Endothelial cell of umbilical vein (primary cell): ENCODE measurements at regions of chr12 and their contacts with region 1.

Region 1: DNA sequence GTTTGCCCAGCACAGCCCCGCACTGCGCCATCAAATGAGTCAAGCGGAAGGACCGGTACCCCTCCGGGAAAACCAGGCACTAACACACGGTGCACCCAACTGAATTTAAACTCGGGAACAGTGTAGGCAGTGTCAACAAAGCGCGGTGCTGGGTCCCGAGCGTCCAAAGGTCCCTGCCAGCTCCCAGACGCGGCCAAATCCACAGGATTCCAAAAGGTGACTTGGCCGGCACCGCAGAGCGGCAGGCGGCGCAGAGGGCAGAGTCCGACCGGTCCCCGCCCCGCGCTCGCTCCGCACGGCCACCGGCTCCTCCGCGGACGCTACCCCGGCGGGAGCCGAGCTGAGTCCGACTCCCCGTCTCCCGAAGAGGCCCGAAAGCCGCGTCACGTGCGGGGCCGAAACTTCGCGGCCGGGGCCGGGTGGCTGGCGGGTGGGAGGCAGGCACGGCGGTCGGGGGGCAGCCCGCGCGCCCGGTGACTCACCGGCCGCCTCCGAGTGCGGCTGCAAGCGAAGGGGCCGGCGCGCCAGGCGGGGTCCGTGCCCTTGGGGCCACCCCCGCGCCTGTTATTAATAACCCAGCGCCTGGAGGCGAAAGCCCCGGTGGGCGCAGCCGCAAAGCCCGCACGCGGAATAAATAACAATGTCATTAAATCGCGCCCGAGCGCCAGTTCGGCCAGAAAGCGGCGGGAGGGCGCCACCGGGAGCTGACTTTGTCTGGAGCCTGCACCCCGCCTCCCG is 863 bp downstream of the DENND5B start:
- DNase-seq: peak; percentile 67
- H3K4me3 ChIP-seq: peak overlapping the region; percentile 56 to 99 (median 63)
- H3K27ac ChIP-seq: peak overlapping the region; percentile 90
- H3K4me1 ChIP-seq: peaks cover 17% of the 10 kb centered on the region
- H3K27me3 ChIP-seq: peaks cover 0 to 2% of the 10 kb centered on the region in 2 experiments
- CTCF ChIP-seq: peak in 1 of 2 donors; percentile 23
- POLR2A ChIP-seq: no peak

Region 2: DNA sequence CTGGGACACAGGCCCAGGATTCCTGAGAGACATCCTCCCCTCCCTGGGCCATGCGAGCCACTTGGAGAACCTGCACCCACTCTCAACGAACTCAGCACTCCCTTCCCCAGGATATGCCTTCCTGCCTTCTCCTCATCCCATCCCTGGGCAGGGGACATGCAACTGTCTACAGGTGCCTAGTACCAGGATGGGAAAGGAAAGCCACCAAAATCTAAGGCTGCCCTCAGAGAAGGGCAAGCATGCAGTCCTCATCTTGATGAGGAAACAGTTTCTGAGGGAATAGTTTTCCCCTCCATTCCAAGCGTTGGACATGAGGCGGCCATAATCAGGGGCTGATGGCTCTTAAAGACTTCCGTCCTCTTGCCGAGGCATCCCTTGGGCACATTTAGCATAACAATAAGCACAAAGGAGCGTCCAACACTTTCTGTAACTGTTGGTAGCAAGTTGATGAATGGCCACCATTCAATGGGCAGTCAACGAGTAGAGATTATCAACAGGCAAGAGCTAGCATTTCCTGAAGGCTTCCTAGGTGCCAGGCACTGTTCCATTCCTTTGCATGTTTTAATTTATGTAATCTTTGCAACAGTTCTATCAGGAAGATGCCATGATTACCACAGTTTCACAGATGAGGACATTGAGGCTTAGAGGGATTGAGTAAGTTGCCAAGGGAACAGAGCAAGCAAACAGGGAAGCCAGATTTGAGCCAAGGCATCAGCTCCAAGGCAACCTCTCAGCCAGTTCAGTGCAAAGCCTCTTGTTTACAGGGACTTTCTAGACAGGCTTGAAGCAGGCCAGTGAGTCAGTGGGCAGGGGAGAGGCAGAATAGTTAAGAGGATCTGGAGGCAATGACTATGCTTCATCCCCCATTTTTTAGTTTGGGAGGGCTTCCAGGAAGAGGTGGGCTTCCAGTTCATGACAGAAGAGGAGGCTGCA is 369.2 kb before region 1 on chr12:
- CTCF ChIA-PET with region 1: no interaction called
- POLR2A ChIA-PET with region 1: no interaction called
- dilution Hi-C with region 1: no loop called
- intact Hi-C with region 1: no loop called
- DNase-seq: no peak
- H3K4me3 ChIP-seq: no peak overlapping the region
- H3K27ac ChIP-seq: no peak overlapping the region
- H3K4me1 ChIP-seq: no peaks in the 10 kb centered on the region
- H3K27me3 ChIP-seq: peaks cover 0 to 6% of the 10 kb centered on the region in 2 experiments
- CTCF ChIP-seq: no peak
- POLR2A ChIP-seq: no peak

Region 3: DNA sequence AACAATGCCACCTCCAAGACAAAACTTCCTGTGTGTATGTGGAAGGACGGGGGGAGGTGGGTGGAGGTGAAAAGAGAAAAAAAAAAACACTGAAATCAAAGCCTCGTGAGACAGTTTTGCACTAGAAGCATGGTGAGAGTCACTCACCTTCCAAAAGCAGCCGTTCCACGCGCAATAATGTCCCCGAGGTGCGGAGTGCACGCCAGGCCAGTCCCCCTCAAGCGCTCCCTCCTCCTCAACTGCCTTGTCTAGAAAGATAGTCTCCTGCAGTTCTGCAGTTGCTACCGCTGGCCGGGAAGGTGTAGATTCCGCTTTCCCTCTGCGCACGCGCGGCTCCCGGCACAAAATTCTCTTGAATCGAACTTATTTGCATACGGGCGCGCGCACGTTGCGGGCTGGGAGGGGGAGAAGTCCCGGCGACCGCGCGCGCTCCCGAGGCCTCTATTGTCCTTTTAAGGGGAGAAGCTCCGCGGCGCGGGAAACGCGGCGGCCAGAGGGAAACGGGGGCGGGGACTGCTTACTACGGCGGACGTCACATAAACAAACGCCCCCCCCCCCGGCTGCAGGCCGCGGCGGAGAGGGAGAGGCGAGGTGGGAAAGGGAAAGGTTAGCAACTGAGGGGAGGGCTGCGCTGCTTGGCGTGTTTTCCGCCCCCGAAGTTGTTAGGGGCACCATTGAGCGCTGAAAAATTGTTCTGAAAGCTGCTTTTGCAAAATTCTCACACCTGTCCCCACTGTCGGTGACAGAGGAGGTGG is 264.0 kb before region 1 on chr12 and contains the start of gene SINHCAF:
- CTCF ChIA-PET with region 1: no interaction called
- POLR2A ChIA-PET with region 1: no interaction called
- dilution Hi-C with region 1: no loop called
- intact Hi-C with region 1: loop called (anchors 5 kb)
- DNase-seq: peak; percentile 99
- H3K4me3 ChIP-seq: peak within 1 kb of the TSS; percentile 53 to 98 (median 97)
- H3K27ac ChIP-seq: peak within 1 kb of the TSS; percentile 88
- H3K4me1 ChIP-seq: peaks cover 25% of the 10 kb centered on the region
- H3K27me3 ChIP-seq: peaks cover 0 to 12% of the 10 kb centered on the region in 2 experiments
- CTCF ChIP-seq: no peak
- POLR2A ChIP-seq: peak; percentile 97
- total RNA-seq, gene SINHCAF: 73.5 and 83.4 TPM in 2 replicates

Region 4: DNA sequence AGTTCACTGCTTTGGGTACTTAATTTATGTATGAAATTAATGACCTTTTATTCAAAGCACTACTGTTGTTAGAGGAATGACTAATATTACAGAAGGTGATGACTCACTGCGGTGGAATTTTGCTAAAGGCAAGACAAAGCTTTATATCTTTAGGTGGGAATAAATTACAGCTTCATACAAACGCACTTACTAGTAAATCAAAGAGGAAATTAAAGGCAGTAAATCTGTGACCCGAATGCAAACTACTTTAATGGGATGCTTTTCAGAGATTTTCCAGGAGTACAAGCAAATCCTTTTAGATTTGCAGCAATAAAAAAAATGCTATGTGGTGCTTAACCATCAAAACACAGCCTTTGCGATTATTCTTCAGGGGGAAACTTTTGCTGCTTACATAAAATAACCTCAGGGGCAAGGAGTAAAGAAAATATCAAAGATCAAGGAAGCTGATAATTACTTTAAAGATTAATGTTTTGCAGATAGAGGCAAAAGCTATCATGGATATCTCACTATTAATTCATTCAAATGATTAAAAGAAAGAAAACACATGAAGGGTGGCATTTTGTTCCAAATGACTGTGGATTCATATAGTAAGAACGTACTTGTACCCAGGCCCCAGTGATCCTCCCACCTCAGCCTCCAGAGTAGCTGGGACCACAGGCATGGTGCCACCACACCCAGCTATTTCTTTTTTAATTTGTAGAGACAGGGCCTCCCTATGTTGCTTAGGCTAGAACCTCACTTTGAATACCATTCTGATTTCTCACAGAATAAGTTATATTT is 98.1 kb before region 1 on chr12:
- CTCF ChIA-PET with region 1: interaction called, 5 read pairs
- POLR2A ChIA-PET with region 1: interaction called, 3 read pairs
- dilution Hi-C with region 1: no loop called
- intact Hi-C with region 1: loop called (anchors 1 kb)
- DNase-seq: peak; percentile 94
- H3K4me3 ChIP-seq: peak overlapping the region in 1 of 3 experiments; percentile 26
- H3K27ac ChIP-seq: peak overlapping the region; percentile 90
- H3K4me1 ChIP-seq: peaks cover 26% of the 10 kb centered on the region
- H3K27me3 ChIP-seq: no peaks in the 10 kb centered on the region
- CTCF ChIP-seq: no peak
- POLR2A ChIP-seq: no peak

Region 5: GRCh38 chr12:31574803-31575575 is 15.1 kb before region 1 on chr12:
- CTCF ChIA-PET with region 1: interaction called, 7 read pairs
- POLR2A ChIA-PET with region 1: no interaction called
- dilution Hi-C with region 1: no loop called
- intact Hi-C with region 1: loop called (anchors 1 kb)
- DNase-seq: peak; percentile 90
- H3K4me3 ChIP-seq: no peak overlapping the region
- H3K27ac ChIP-seq: peak overlapping the region; percentile 59
- H3K4me1 ChIP-seq: peaks cover 23% of the 10 kb centered on the region
- H3K27me3 ChIP-seq: no peaks in the 10 kb centered on the region
- CTCF ChIP-seq: no peak
- POLR2A ChIP-seq: no peak

Region 6: DNA sequence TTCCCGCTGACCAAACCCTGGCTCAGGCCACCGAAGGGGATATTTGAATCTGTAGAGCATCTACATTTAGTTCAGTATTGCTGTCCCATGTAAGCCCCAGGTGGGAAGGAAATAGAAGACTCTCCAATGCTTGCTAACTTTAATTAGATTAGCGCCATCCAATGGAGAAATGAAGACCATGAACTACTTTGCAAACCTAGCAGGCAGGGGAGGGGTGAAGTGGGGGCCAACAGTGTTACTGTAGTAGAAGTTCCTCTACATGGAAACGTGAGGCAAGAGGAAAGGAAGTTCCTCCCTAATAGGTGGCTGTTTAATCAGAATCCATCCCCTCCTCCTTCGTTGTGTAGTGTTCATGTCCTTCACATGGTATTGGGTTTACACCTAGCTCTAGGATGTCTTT is 10.2 kb after region 1 on chr12:
- CTCF ChIA-PET with region 1: interaction called, 7 read pairs
- POLR2A ChIA-PET with region 1: no interaction called
- dilution Hi-C with region 1: no loop called
- intact Hi-C with region 1: loop called (anchors 1 kb)
- DNase-seq: no peak
- H3K4me3 ChIP-seq: no peak overlapping the region
- H3K27ac ChIP-seq: no peak overlapping the region
- H3K4me1 ChIP-seq: peaks cover 6% of the 10 kb centered on the region
- H3K27me3 ChIP-seq: no peaks in the 10 kb centered on the region
- CTCF ChIP-seq: no peak
- POLR2A ChIP-seq: no peak